Naive thymus-derived CD4-positive, alpha-beta T cell (primary cell): ENCODE measurements at regions of chr10 and their contacts with region 1.

Region 1: GRCh38 chr10:31808258-31809218 is 120.1 kb downstream of the ARHGAP12 start:
- DNase-seq: peak in 8 of 9 donors; percentile 21 to 62 (median 48)
- ATAC-seq: peak; percentile 77
- H3K4me3 ChIP-seq: no peak overlapping the region
- H3K4me3 Mint-ChIP-seq: peak overlapping the region in 3 of 10 donors; percentile 51 to 78 (median 56)
- H3K27ac ChIP-seq: no peak overlapping the region
- H3K27ac Mint-ChIP-seq: peak overlapping the region in 8 of 9 donors; percentile 17 to 94 (median 71)
- H3K4me1 ChIP-seq: no peaks in the 10 kb centered on the region
- H3K4me1 Mint-ChIP-seq: peaks cover 2 to 11% (median 6%) of the 10 kb centered on the region in 7 donors
- H3K27me3 ChIP-seq: no peaks in the 10 kb centered on the region
- H3K27me3 Mint-ChIP-seq: no peaks in the 10 kb centered on the region

Region 2: DNA sequence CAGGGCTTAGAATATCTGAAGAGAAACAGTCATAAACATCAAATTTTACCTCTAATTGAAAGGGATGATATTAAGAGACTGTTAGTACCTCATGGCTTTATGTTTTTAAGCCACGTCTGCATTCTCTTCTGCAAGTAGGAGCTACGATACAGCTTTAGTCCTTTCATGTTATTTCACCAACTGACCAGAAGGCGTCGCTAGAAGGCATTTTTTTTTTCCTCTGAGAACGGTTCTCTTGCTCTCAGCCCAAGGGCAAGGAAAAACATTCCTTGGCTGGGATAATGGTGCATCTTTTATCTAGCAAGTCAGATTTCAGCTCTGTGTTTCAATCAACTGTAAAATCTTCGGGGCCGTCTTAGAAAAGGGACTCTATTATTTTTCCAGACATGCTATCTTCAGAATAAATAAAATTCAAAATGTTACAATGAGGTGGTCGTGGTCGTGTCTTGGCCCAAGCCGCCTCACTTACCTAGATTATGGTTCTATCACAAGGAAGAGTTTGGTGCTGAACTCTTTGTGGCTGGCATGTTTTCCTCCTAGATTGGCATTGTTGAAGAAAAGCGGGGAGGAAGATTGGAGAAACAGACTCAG is 1137.4 kb before region 1 on chr10:
- CTCF ChIA-PET with region 1: no interaction called
- POLR2A ChIA-PET with region 1: no interaction called
- intact Hi-C with region 1: loop called in 1 of 2 experiments (anchors 5 kb)
- DNase-seq: peak in 6 of 9 donors; percentile 15 to 51 (median 40)
- ATAC-seq: peak; percentile 76
- H3K4me3 ChIP-seq: peak overlapping the region; percentile 40
- H3K4me3 Mint-ChIP-seq: peak overlapping the region in 9 of 10 donors; percentile 43 to 80 (median 74)
- H3K27ac ChIP-seq: no peak overlapping the region
- H3K27ac Mint-ChIP-seq: no peak overlapping the region
- H3K4me1 ChIP-seq: no peaks in the 10 kb centered on the region
- H3K4me1 Mint-ChIP-seq: peaks cover 0 to 13% (median 0%) of the 10 kb centered on the region in 7 donors
- H3K27me3 ChIP-seq: no peaks in the 10 kb centered on the region
- H3K27me3 Mint-ChIP-seq: peaks cover 0 to 23% (median 12%) of the 10 kb centered on the region in 5 donors

Region 3: GRCh38 chr10:30751678-30752331 is 1056.7 kb before region 1 on chr10:
- CTCF ChIA-PET with region 1: interaction called, 4 read pairs
- POLR2A ChIA-PET with region 1: no interaction called
- intact Hi-C with region 1: loop called in 1 of 2 experiments (anchors 1 kb)
- DNase-seq: peak in 6 of 9 donors; percentile 40 to 76 (median 61)
- ATAC-seq: no peak
- H3K4me3 ChIP-seq: no peak overlapping the region
- H3K4me3 Mint-ChIP-seq: peak overlapping the region in 6 of 10 donors; percentile 4 to 59 (median 20)
- H3K27ac ChIP-seq: no peak overlapping the region
- H3K27ac Mint-ChIP-seq: peak overlapping the region in 3 of 9 donors; percentile 9 to 76 (median 32)
- H3K4me1 ChIP-seq: peaks cover 0 to 35% of the 10 kb centered on the region in 2 donors
- H3K4me1 Mint-ChIP-seq: peaks cover 5 to 44% (median 14%) of the 10 kb centered on the region in 7 donors
- H3K27me3 ChIP-seq: no peaks in the 10 kb centered on the region
- H3K27me3 Mint-ChIP-seq: no peaks in the 10 kb centered on the region

Region 4: DNA sequence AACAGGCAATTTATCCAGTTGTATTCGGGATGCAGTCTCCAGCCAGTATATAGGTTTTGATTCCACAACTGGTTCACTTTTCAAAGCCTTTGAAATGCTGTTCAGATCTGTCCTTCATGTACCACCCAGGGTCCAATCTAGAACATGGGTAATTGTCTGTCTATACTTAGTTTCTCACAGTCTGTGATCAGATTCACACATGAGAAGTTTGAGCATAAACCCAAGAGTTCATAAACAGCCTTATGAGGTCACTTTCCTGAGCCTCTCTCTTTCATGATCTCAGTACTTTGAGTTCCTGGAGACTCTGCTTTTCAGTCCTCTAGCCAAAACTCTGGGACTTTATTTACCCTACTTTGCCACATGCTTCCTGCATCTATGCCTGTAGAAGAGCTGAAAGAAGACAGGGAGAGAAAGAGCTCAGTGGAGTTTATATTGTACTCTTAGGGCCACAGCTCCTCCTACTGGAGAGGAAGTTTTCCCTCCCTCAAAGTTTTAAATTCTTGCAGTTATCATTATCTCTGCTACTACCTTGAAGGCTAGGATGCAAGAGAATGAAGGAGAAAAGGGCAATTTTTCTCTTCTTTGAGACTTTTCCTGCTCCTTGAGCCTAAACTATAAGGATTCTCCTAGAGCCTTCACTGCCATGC is 317.6 kb before region 1 on chr10:
- CTCF ChIA-PET with region 1: no interaction called
- POLR2A ChIA-PET with region 1: no interaction called
- intact Hi-C with region 1: loop called (anchors 1 to 5 kb)
- DNase-seq: peak in 6 of 9 donors; percentile 30 to 50 (median 36)
- ATAC-seq: peak; percentile 72
- H3K4me3 ChIP-seq: no peak overlapping the region
- H3K4me3 Mint-ChIP-seq: no peak overlapping the region
- H3K27ac ChIP-seq: no peak overlapping the region
- H3K27ac Mint-ChIP-seq: peak overlapping the region in 1 of 9 donors; percentile 1
- H3K4me1 ChIP-seq: no peaks in the 10 kb centered on the region
- H3K4me1 Mint-ChIP-seq: peaks cover 0 to 12% (median 0%) of the 10 kb centered on the region in 7 donors
- H3K27me3 ChIP-seq: no peaks in the 10 kb centered on the region
- H3K27me3 Mint-ChIP-seq: no peaks in the 10 kb centered on the region

Region 5: GRCh38 chr10:31630861-31631567 is 177.5 kb before region 1 on chr10:
- CTCF ChIA-PET with region 1: no interaction called
- POLR2A ChIA-PET with region 1: no interaction called
- intact Hi-C with region 1: no loop called
- DNase-seq: no peak
- ATAC-seq: no peak
- H3K4me3 ChIP-seq: no peak overlapping the region
- H3K4me3 Mint-ChIP-seq: no peak overlapping the region
- H3K27ac ChIP-seq: no peak overlapping the region
- H3K27ac Mint-ChIP-seq: no peak overlapping the region
- H3K4me1 ChIP-seq: no peaks in the 10 kb centered on the region
- H3K4me1 Mint-ChIP-seq: no peaks in the 10 kb centered on the region
- H3K27me3 ChIP-seq: no peaks in the 10 kb centered on the region
- H3K27me3 Mint-ChIP-seq: peaks cover 0 to 27% (median 7%) of the 10 kb centered on the region in 5 donors